Activated CD8-positive, alpha-beta T cell treated with anti-CD3 and anti-CD28 coated beads for 36 hours (primary cell): ENCODE measurements at regions of chr19 and their contacts with region 1.

Region 1: DNA sequence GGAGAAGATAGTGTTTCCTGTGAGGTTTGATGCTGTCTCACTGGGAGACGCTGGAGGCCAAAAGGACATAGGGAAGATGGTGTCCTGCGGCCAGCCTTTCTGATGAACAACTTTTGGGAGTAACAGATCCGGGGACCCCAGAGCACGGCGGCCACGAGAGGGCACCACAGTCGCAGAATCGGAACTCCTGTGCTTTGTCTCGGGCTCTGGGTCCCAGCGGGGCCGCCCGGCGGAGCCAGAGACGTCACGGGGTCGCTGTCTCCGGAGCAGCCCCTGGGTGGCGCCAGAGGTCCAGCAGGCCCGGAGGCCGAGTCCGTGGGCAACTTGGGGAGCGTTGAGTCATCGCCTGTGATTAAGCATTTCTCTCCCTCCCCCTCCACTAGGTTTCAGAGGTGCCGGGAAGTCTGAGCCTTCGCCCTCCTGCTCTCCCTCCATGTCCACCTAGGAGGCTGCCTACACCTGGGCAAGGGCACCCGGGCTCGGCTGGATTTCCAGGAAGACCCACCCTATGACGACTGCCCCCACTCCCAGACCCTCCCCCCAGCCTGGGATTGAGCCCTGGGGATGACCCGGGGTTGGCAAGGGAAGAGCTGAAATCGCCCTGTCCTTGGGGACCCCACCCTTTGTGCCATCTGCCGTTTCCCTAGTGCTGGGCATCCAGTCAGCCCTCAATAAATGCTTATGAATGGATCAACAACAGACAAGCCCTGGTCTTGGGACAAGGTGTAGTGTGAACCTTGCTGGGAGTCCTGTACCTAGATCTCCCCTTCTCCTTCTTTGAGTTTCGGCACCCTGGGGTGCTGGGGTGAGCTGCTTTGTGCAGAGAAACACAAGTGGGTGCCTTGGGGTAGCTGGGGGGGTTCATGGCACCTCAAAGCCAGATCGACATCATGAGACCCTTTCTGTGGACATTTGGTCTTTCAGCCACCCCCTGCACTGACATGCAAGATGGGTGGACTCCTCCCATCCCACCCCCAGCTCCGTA is 3.4 kb downstream of the NANOS3 start:
- DNase-seq: peak; percentile 99
- ATAC-seq: peak; percentile 96
- H3K4me3 Mint-ChIP-seq: peak overlapping the region; percentile 47
- H3K27ac Mint-ChIP-seq: peak overlapping the region; percentile 75
- H3K4me1 Mint-ChIP-seq: peaks cover 34% of the 10 kb centered on the region
- H3K27me3 Mint-ChIP-seq: no peaks in the 10 kb centered on the region
- CTCF ChIP-seq: peak; percentile 99

Region 2: GRCh38 chr19:13902993-13903614 is 22.8 kb after region 1 on chr19:
- CTCF ChIA-PET with region 1: interaction called, 11 read pairs
- POLR2A ChIA-PET with region 1: interaction called, 4 read pairs
- intact Hi-C with region 1: no loop called
- DNase-seq: peak; percentile 62
- ATAC-seq: no peak
- H3K4me3 Mint-ChIP-seq: no peak overlapping the region
- H3K27ac Mint-ChIP-seq: no peak overlapping the region
- H3K4me1 Mint-ChIP-seq: peaks cover 18% of the 10 kb centered on the region
- H3K27me3 Mint-ChIP-seq: no peaks in the 10 kb centered on the region
- CTCF ChIP-seq: peak; percentile 63

Region 3: GRCh38 chr19:14048443-14049153 is 168.2 kb after region 1 on chr19:
- CTCF ChIA-PET with region 1: interaction called, 19 read pairs
- POLR2A ChIA-PET with region 1: no interaction called
- intact Hi-C with region 1: no loop called
- DNase-seq: peak; percentile 85
- ATAC-seq: peak; percentile 97
- H3K4me3 Mint-ChIP-seq: no peak overlapping the region
- H3K27ac Mint-ChIP-seq: no peak overlapping the region
- H3K4me1 Mint-ChIP-seq: peaks cover 13% of the 10 kb centered on the region
- H3K27me3 Mint-ChIP-seq: no peaks in the 10 kb centered on the region
- CTCF ChIP-seq: peak; percentile 96

Region 4: GRCh38 chr19:14059093-14059480 is 178.7 kb after region 1 on chr19:
- CTCF ChIA-PET with region 1: interaction called, 24 read pairs
- POLR2A ChIA-PET with region 1: interaction called, 4 read pairs
- intact Hi-C with region 1: no loop called
- DNase-seq: peak; percentile 77
- ATAC-seq: peak; percentile 77
- H3K4me3 Mint-ChIP-seq: no peak overlapping the region
- H3K27ac Mint-ChIP-seq: no peak overlapping the region
- H3K4me1 Mint-ChIP-seq: peaks cover 16% of the 10 kb centered on the region
- H3K27me3 Mint-ChIP-seq: peaks cover 37% of the 10 kb centered on the region
- CTCF ChIP-seq: peak; percentile 91

Region 5: DNA sequence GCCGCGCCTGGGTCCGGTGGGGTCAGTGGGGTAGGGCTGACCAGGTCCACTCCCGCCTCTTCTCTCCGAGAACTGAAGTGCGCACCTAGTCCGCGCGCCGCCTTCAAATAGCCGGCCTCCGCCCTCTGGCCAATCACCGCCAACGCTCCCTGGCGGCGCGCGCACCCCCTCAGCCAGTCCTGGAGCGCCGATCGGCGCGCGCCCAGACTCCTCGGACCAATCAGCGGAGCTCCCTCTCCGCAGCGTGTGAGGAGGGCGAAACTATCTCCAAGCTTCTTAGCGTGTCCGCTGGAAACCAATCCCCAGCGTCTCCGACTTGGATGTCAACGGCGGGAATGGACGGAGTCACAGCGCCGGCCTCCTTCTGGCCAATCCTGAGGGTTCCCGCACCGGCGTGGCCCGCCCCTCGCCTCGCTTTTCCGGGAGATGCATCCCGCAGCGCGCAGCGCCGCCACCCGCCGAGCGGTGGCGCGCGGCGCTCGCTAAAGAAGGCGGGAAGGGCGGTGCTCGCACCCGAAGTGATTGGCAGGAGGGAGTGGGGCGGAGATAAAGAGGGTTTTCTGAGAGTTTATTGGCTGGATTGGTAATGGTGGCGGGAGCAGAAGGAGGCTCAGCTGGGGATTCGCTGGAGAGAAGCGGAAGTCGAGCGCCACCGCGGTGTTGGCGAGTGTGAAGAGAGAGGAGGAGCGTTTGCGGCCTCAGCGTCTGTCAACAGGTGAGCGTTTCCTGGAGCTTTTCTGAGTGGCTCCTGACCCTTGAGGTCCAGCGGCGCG is 256.3 kb after region 1 on chr19 and contains the start of gene ASF1B:
- CTCF ChIA-PET with region 1: interaction called, 12 read pairs
- POLR2A ChIA-PET with region 1: interaction called, 3 read pairs
- intact Hi-C with region 1: no loop called
- DNase-seq: peak; percentile 99
- ATAC-seq: peak; percentile 83
- H3K4me3 Mint-ChIP-seq: peak within 1 kb of the TSS; percentile 95
- H3K27ac Mint-ChIP-seq: peak within 1 kb of the TSS; percentile 98
- H3K4me1 Mint-ChIP-seq: peaks cover 36% of the 10 kb centered on the region
- H3K27me3 Mint-ChIP-seq: no peaks in the 10 kb centered on the region
- CTCF ChIP-seq: peak; percentile 67
- total RNA-seq, gene ASF1B: 53.5 to 55.3 TPM